ENCODE measurements at regions of chr2 and their contacts with region 1.

Region 1: GRCh38 chr2:147297820-147298219 is 547.0 kb upstream of the ACVR2A start:
- DNase-seq: peak; percentile 45
- H3K4me3 Mint-ChIP-seq: no peak overlapping the region
- H3K27ac Mint-ChIP-seq: peak overlapping the region; percentile 86
- H3K4me1 Mint-ChIP-seq: peaks cover 58% of the 10 kb centered on the region
- H3K27me3 Mint-ChIP-seq: no peaks in the 10 kb centered on the region

Region 2: GRCh38 chr2:147082850-147083522 is 214.8 kb before region 1 on chr2:
- CTCF ChIA-PET with region 1: no interaction called
- intact Hi-C with region 1: loop called (anchors 2 kb)
- DNase-seq: peak; percentile 74
- H3K4me3 Mint-ChIP-seq: no peak overlapping the region
- H3K27ac Mint-ChIP-seq: no peak overlapping the region
- H3K4me1 Mint-ChIP-seq: peaks cover 3% of the 10 kb centered on the region
- H3K27me3 Mint-ChIP-seq: peaks cover 9% of the 10 kb centered on the region

Region 3: DNA sequence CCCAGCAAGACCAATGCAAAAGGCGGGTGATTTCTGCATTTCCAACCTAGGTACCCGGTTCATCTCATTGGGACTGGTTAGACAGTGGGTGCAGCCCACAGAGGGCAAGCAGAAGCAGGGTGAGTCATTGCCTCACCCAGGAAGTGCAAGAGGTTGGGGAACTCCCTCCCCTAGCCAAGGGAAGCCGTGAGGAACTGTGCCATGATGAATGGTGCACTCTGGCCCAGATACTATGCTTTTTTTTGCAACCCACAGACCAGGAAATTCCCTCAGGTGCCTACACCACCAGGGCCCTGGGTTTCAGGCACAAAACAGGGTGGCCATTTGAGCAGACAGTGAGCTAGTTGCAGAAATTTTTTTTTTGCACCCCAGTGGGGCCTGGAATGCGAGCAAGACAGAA is 115.6 kb before region 1 on chr2:
- CTCF ChIA-PET with region 1: interaction called, 4 read pairs
- intact Hi-C with region 1: loop called (anchors 1 kb)
- DNase-seq: peak; percentile 72
- H3K4me3 Mint-ChIP-seq: no peak overlapping the region
- H3K27ac Mint-ChIP-seq: peak overlapping the region; percentile 73
- H3K4me1 Mint-ChIP-seq: peaks cover 18% of the 10 kb centered on the region
- H3K27me3 Mint-ChIP-seq: peaks cover 4% of the 10 kb centered on the region

Region 4: GRCh38 chr2:147310335-147311057 is 12.7 kb after region 1 on chr2:
- CTCF ChIA-PET with region 1: no interaction called
- intact Hi-C with region 1: loop called (anchors 1 kb)
- DNase-seq: no peak
- H3K4me3 Mint-ChIP-seq: no peak overlapping the region
- H3K27ac Mint-ChIP-seq: peak overlapping the region; percentile 53
- H3K4me1 Mint-ChIP-seq: peaks cover 4% of the 10 kb centered on the region
- H3K27me3 Mint-ChIP-seq: no peaks in the 10 kb centered on the region

Region 5: GRCh38 chr2:147331790-147332419 is 34.1 kb after region 1 on chr2:
- CTCF ChIA-PET with region 1: interaction called, 5 read pairs
- intact Hi-C with region 1: loop called (anchors 1 kb)
- DNase-seq: peak; percentile 68
- H3K4me3 Mint-ChIP-seq: no peak overlapping the region
- H3K27ac Mint-ChIP-seq: no peak overlapping the region
- H3K4me1 Mint-ChIP-seq: peaks cover 13% of the 10 kb centered on the region
- H3K27me3 Mint-ChIP-seq: no peaks in the 10 kb centered on the region

Region 6: GRCh38 chr2:147416099-147416498 is 118.3 kb after region 1 on chr2:
- CTCF ChIA-PET with region 1: no interaction called
- intact Hi-C with region 1: loop called (anchors 2 kb)
- DNase-seq: no peak
- H3K4me3 Mint-ChIP-seq: no peak overlapping the region
- H3K27ac Mint-ChIP-seq: no peak overlapping the region
- H3K4me1 Mint-ChIP-seq: peaks cover 19% of the 10 kb centered on the region
- H3K27me3 Mint-ChIP-seq: no peaks in the 10 kb centered on the region

Region 7: GRCh38 chr2:147636238-147636882 is 338.5 kb after region 1 on chr2:
- CTCF ChIA-PET with region 1: no interaction called
- intact Hi-C with region 1: loop called (anchors 2 kb)
- DNase-seq: no peak
- H3K4me3 Mint-ChIP-seq: no peak overlapping the region
- H3K27ac Mint-ChIP-seq: no peak overlapping the region
- H3K4me1 Mint-ChIP-seq: peaks cover 24% of the 10 kb centered on the region
- H3K27me3 Mint-ChIP-seq: no peaks in the 10 kb centered on the region

Region 8: GRCh38 chr2:148614322-148615049 is 1316.7 kb after region 1 on chr2:
- CTCF ChIA-PET with region 1: no interaction called
- intact Hi-C with region 1: no loop called
- DNase-seq: peak; percentile 43
- H3K4me3 Mint-ChIP-seq: no peak overlapping the region
- H3K27ac Mint-ChIP-seq: no peak overlapping the region
- H3K4me1 Mint-ChIP-seq: peaks cover 11% of the 10 kb centered on the region
- H3K27me3 Mint-ChIP-seq: no peaks in the 10 kb centered on the region

Measured in activated naive CD4-positive, alpha-beta T cell treated with anti-CD3 and anti-CD28 coated beads for 36 hours (primary cell).